H1 (cell line): ENCODE measurements at regions of chr15 and their contacts with region 1.

Region 1: DNA sequence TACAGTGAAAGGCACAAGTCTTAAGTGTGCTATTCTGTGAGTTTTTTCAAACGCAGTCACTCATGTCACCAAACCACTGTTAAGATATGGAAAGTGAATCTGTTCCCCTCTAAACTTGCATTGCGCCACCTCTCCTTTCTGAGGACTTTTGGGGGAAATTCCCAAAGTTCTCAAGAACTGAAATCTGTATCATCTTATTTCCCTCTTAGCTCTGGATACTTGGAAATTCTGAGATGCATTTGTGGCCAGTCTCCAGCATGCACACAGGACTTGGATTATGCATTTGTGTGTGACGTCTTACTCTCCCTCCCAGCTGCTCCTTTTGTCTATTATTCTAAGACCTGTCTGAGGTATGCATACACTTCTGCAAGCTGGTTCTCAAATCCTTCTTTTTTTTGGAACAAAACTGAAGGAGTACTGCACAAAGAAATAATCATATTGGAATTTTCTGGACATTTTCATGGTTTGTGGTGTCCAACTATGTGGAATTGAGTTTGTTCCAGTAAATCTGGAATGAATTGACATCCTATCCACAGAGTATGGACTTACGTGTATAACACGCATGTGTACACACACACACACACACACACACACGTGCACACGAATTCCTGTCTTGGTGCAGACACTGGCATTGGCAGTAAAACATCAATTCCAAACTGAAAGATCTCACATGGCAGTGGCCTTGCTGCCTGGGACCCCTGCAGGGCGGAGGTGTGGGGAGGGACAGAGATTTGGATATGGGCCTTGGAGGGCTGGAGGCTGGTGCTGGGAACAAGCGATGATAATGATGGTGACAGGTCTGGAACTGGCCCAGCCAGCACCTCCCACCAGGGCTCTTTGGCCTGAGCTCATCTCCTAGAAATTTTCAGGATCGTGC is 8.2 kb upstream of the LCTL start:
- DNase-seq: no peak
- H3K4me3 ChIP-seq: no peak overlapping the region
- H3K27ac ChIP-seq: no peak overlapping the region
- H3K4me1 ChIP-seq: no peaks in the 10 kb centered on the region
- H3K27me3 ChIP-seq: no peaks in the 10 kb centered on the region
- CTCF ChIP-seq: no peak
- EP300 ChIP-seq: no peak
- POLR2A ChIP-seq: no peak
- RAD21 ChIP-seq: no peak

Region 2: DNA sequence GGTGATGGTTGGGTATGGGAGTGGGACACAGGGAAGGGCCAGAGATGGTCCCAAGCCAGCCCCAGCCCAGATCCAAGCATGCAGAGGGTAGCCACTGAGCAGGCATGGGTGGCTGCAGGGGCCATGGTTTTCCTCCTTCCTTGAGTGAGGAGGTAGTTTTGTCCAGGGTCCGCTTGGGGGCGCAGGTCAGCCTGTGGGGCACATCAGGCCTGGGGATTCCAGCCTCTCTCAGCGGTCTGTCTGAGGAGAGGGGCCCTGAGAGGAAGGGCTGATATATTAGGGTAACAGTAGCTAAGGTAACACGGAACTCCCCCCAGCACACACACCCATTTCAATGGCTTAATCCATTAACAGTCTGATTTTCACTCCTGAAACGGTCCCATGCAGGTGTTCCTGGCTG is 14.6 kb after region 1 on chr15:
- CTCF ChIA-PET with region 1: interaction called, 11 read pairs
- POLR2A ChIA-PET with region 1: no interaction called
- DNase-seq: peak in 1 of 2 experiments; percentile 83
- H3K4me3 ChIP-seq: peak overlapping the region in 3 of 4 experiments; percentile 6 to 44 (median 19); a peak in 4 of 8 replicates
- H3K27ac ChIP-seq: no peak overlapping the region
- H3K4me1 ChIP-seq: peaks cover 0 to 5% (median 3%) of the 10 kb centered on the region in 4 experiments; a peak in 4 of 7 replicates
- H3K27me3 ChIP-seq: 0 out of 7 replicates have a peak, but pooled peaks cover 0 to 2% (median 0%) of the 10 kb centered on the region in 4 experiments
- CTCF ChIP-seq: peak; percentile 76 to 88 (median 78)
- EP300 ChIP-seq: no peak
- POLR2A ChIP-seq: no peak
- RAD21 ChIP-seq: peak; percentile 71 to 79